Cardiac septum (tissue), 1 donor: ENCODE measurements at regions of chr2 and their contacts with region 1.

Region 1: GRCh38 chr2:71500426-71501079 is 47.2 kb downstream of the DYSF start:
- DNase-seq: peak; percentile 78

Region 2: DNA sequence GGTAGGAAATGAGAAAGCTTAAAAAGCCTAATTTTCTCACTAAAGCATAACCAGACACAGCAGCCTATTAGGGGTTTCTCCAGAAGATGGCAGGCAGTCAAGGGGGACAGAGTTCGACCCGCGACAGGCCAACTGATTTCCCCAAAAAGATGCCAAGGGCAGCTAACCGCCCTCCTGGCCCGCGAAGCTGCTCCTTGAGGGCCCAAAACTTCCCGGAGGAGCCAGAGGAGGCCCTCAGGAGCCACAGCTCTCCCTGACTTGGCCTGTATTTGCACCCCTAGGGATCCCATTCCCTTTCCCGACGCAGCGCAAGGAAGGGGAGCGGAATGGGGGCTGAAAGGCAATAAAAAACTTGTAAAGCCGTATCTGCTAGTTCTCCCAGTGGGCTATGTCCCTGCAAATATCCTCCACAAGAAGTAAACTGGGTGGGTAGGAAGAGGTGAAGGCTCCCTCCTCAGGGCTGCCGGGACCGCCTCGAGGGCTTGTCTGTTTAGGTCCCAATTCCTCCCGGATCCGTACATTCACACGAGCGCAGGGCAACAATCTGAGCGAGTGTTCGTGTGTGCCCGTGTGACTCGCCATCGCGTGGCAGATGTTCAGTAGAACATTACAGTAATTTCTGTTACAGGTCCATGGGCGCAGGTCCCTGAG is 432.9 kb before region 1 on chr2:
- intact Hi-C with region 1: no loop called
- DNase-seq: no peak

Region 3: DNA sequence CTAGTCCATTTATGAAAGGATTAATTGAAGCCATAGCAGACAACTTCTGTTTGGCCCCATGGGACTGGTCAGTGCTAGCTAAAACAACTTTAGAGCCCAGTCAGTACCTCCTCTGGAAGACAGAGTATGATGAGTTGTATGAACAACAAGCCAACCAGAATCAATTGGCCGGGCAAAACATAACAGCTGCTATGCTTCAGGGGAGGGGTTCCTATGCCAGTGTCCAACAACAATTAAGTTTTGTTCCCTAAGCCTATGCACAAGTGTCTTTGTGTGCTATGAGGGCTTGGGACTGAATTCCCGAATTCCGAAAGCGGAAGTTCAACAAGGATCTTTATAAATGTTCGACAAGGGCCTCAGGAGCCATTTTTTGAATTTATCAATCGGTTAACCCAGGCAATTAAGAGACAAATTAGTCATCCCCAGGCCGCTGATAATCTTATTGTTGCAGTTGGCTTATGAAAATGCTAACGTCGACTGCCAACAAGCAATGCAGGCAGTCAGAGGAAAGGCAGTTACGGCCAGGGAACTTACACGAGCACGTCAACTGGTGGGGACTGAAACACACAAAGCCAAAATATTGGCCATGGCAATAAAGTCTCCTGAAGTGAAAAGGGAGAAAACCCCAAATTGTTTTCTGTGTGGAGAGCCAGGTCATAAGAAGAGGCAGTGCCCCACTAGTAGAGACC is 111.0 kb before region 1 on chr2:
- intact Hi-C with region 1: no loop called
- DNase-seq: no peak

Region 4: DNA sequence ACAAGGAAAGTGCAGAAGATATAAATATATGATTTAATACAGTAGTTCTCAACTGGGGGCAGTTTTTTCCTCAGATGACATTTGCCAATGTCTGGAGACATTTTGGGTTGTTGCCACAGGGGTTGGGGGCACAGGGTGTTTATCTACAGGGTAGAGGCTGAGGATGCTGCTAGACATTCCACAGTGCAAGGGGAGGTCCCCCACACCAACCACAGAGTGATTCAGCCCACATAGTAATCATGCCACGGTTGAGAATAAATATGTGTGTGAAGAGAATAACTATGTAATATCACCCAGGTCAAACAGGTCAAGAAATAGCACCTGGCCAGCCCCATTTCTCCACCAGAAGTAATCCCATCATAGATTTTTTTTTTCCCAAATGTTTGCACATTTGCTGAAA is 29.3 kb before region 1 on chr2:
- intact Hi-C with region 1: loop called (anchors 2 kb)
- DNase-seq: no peak